ENCODE measurements at regions of chr6 and their contacts with region 1.

Region 1: GRCh38 chr6:12911387-12911960 is 194.9 kb downstream of the PHACTR1 start:
- DNase-seq: peak; percentile 46
- H3K4me3 ChIP-seq: no peak overlapping the region; a peak in 1 of 4 replicates
- H3K27ac ChIP-seq: no peak overlapping the region
- H3K4me1 ChIP-seq: no peaks in the 10 kb centered on the region
- H3K27me3 ChIP-seq: no peaks in the 10 kb centered on the region
- CTCF ChIP-seq: peak; percentile 59
- EP300 ChIP-seq: no peak
- RAD21 ChIP-seq: peak; percentile 91

Region 2: DNA sequence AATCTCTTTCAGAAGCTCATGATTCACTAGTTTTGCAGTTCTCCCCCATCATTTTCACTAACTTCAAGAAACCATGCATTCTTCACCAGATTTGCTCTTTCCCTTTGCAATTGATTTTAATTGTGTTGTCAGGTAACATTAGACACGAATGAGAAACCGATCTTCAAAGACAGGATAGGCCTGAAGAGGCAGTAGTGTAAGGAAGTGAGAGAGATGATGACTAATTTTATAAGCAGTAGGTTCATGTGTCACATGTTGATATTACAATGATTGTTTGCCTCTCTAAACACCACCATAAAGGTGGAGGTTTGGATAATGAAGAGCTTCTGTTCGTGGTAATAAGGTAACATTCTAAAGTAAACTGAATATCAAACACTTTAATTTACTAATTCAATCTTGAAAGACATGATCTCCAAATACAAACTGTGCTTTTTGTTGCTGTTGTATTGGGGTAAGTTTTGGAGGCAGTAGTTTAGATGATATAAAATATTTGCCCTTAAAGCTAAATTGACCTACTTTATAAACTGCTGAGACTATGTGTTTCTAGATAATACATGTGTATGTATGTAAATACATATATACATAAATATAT is 12.3 kb after region 1 on chr6:
- CTCF ChIA-PET with region 1: interaction called, 16 read pairs
- POLR2A ChIA-PET with region 1: no interaction called
- DNase-seq: no peak
- H3K4me3 ChIP-seq: no peak overlapping the region
- H3K27ac ChIP-seq: no peak overlapping the region
- H3K4me1 ChIP-seq: no peaks in the 10 kb centered on the region; a peak in 1 of 4 replicates
- H3K27me3 ChIP-seq: no peaks in the 10 kb centered on the region
- CTCF ChIP-seq: no peak
- EP300 ChIP-seq: no peak
- RAD21 ChIP-seq: no peak

Region 3: GRCh38 chr6:13012977-13013680 is 101.7 kb after region 1 on chr6:
- CTCF ChIA-PET with region 1: interaction called, 22 read pairs
- POLR2A ChIA-PET with region 1: no interaction called
- DNase-seq: no peak
- H3K4me3 ChIP-seq: peak overlapping the region; percentile 23 to 46; a peak in 2 of 4 replicates
- H3K27ac ChIP-seq: no peak overlapping the region
- H3K4me1 ChIP-seq: peaks cover 0 to 21% of the 10 kb centered on the region in 2 experiments; a peak in 2 of 4 replicates
- H3K27me3 ChIP-seq: peaks cover 36% of the 10 kb centered on the region
- CTCF ChIP-seq: no peak
- EP300 ChIP-seq: no peak
- RAD21 ChIP-seq: no peak

Region 4: GRCh38 chr6:13079096-13079723 is 167.7 kb after region 1 on chr6:
- CTCF ChIA-PET with region 1: no interaction called
- POLR2A ChIA-PET with region 1: no interaction called
- DNase-seq: no peak
- H3K4me3 ChIP-seq: no peak overlapping the region
- H3K27ac ChIP-seq: no peak overlapping the region
- H3K4me1 ChIP-seq: no peaks in the 10 kb centered on the region; a peak in 1 of 4 replicates
- H3K27me3 ChIP-seq: no peaks in the 10 kb centered on the region
- CTCF ChIP-seq: no peak
- EP300 ChIP-seq: no peak
- RAD21 ChIP-seq: no peak

Region 5: DNA sequence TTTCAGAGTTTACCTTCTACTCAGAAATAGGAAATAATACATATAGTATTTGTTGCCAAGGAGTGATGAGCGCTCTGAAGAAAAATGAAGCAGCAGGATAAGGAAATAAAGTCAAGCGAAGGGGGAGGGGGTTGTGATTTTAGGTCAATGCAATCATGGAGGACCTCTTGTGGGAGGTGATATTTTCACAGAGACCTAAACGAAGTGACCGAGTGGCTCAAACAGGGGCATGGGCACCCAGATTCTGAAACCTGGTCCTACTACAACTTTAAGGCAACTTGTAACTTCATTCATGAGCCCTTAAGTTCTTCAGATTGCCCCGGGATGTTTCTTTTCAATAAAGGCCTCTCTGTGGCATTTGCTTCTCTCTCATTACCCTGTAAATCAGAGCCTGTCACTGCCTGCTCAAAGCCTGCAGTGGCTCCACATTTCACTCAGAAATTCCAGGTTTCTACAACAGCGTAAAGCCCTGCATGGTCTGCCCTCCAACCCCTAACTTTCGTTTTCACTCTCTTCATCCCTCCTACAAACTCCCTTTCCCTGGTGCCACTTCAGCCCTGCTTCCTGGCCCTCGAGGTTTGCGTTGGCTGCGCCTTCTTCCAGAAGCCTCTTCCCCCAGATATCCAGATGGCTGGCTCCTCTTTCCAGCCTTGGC is 254.2 kb after region 1 on chr6:
- CTCF ChIA-PET with region 1: no interaction called
- POLR2A ChIA-PET with region 1: no interaction called
- DNase-seq: no peak
- H3K4me3 ChIP-seq: no peak overlapping the region; a peak in 1 of 4 replicates
- H3K27ac ChIP-seq: no peak overlapping the region
- H3K4me1 ChIP-seq: no peaks in the 10 kb centered on the region; a peak in 1 of 4 replicates
- H3K27me3 ChIP-seq: no peaks in the 10 kb centered on the region; the same call in 1 of the 2 replicates
- CTCF ChIP-seq: no peak
- EP300 ChIP-seq: no peak
- RAD21 ChIP-seq: no peak

Region 6: DNA sequence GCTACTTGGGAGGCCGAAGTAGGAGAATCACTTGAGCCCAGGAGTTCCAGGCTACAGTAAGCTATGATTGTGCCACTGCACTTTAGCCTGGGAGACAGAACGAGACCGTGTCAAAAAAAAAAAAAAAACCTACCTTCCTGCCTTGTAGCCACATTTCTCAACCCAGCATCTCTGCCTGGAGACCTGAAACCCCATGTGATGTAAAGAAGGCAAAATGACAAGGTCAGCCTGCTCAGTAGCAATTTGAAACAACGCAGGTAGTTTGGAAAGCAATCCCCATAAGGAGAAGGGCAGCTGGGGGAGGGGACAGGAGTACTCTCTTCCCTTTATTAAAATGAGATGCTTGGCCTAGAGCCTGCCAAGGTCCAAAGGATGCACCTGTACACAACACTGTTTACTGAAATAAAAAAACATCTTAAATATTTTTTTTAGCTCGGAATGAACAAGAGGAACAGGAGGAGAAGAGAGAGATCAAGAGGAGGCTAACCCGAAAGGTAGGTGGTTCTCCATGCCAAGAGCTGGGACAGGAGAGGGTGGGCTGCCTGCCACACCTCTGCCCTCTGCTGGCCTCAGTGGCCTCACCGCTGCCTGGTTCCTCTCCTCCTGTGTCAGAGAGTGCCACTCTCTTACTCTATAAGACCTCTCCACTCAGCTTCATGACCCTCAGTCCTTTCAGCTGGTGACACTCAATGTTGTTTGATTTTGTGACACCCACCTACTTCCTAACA is 366.5 kb after region 1 on chr6:
- CTCF ChIA-PET with region 1: interaction called, 11 read pairs
- POLR2A ChIA-PET with region 1: no interaction called
- DNase-seq: peak; percentile 48
- H3K4me3 ChIP-seq: no peak overlapping the region
- H3K27ac ChIP-seq: no peak overlapping the region
- H3K4me1 ChIP-seq: no peaks in the 10 kb centered on the region; a peak in 1 of 4 replicates
- H3K27me3 ChIP-seq: no peaks in the 10 kb centered on the region
- CTCF ChIP-seq: no peak; the same call in 1 of the 2 replicates
- EP300 ChIP-seq: no peak
- RAD21 ChIP-seq: peak; percentile 53

Region 7: DNA sequence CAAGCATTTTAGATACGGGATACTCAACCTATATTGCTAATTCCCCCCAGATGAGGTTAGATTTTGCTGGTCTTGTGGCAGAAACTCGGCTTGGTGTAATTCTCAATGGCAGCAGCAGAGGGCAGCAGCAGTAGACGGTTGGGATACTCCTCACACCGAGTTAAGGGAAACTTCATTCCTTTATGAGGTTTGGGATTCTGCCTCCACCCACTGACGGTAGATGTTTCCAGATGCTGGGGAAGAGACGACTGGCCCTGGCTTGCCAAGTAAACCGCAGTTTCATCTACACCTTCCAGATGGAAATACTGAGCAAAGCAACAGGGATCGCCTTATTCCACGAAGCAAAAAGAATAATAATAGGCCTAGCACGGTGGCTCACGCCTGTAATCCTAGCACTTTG is 425.1 kb after region 1 on chr6:
- CTCF ChIA-PET with region 1: interaction called, 143 read pairs
- POLR2A ChIA-PET with region 1: no interaction called
- DNase-seq: peak; percentile 80
- H3K4me3 ChIP-seq: no peak overlapping the region; a peak in 1 of 4 replicates
- H3K27ac ChIP-seq: no peak overlapping the region
- H3K4me1 ChIP-seq: peaks cover 0 to 4% of the 10 kb centered on the region in 2 experiments; a peak in 2 of 4 replicates
- H3K27me3 ChIP-seq: no peaks in the 10 kb centered on the region
- CTCF ChIP-seq: peak; percentile 91
- EP300 ChIP-seq: no peak
- RAD21 ChIP-seq: peak; percentile 99